Mammary epithelial cell (primary cell): ENCODE measurements at regions of chr7 and their contacts with region 1.

Region 1: DNA sequence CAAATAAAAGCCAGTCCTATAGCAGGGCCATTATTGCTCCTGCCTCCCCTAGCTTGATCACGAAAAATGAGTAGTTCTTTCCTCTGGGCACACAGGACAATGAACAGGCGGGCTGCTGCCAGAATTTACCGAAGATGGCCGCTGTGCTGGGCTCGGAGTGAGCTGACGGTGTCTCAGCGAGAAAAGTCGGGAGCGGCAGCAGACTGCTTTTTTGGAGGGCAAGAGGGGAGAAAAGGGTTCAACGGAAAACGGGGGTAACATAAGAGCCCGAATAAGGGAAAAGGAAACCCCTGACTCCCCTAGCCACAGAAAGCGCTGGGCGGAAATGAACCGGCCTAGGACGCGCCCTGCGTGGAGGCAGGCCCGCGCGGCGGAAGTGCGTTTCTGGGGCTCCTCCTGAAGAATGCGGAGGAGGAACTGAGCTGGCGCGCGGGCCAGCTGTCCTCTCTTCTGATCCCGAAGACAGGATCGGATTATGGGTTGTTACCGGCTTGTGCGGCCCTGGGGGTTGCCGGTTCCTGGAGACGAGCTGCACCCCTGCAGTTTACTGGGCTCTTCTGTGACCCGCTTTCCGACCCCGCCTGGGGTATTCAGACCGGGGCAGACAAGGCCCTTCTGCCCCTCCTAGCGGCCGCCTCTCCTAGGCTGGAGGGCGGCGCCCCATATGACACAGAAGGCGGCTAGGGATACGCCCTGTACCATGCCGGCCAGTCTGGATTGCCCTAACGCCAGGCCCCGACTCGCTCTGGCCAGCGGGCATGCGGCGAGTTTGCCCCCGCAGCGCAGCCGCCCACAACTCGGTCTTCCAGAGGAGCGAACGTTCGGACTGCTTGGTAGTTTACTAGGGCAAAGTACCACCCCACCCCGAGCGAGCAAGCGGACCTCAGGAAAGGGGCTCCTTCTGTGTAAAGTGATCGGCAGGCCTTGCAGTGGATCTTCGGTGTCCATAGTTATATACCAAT is 30.1 kb upstream of the KMT2E start:
- DNase-seq: peak; percentile 86
- H3K4me3 ChIP-seq: peak overlapping the region; percentile 53 to 74 (median 54)
- H3K27ac ChIP-seq: peak overlapping the region; percentile 99
- H3K4me1 ChIP-seq: peaks cover 52% of the 10 kb centered on the region
- H3K27me3 ChIP-seq: no peaks in the 10 kb centered on the region
- CTCF ChIP-seq: peak; percentile 3 to 59

Region 2: DNA sequence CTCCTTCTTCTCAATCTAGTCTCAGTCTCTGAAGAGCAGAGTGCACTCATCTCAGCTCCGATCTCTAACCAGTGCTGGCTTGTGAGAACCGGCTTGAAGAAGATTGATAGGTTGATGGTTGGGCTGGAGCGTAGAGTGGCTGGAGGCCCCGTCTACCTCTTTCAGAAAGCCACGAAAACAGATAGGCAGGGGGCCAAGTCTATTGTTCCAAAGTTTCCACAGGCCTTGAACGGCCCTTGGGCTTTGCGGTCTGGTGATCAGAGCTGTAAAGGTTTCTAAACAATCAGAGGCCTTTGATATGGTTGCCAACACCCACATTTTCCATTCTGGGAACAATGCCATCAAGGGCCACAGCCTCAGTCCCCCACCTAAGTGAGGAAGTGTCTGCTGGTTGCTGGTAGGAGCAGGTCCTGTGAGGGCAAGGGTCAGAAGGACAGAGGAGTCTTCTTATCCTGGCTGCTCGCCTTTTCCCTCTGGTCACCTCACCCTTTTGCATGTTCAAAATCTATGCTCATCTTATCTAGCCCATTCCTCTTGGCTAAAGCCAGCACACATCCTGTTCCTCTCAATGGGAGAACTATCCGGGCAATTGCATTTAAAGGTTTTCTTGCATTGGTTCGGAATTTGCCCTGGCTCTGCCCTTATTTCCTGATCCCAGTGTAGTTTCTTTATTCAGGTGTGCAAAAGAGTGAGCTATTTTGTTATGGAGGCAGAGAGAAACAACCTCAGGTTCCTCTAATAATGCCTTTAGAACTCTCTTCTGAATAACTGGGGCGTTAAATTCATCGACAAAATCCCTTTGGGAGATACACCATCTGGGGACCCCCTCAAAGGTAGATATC is 40.1 kb before region 1 on chr7:
- CTCF ChIA-PET with region 1: interaction called, 4 read pairs
- dilution Hi-C with region 1: loop called (anchors 5 kb)
- in situ Hi-C with region 1: no loop called
- intact Hi-C with region 1: loop called (anchors 1 kb)
- DNase-seq: peak; percentile 68
- H3K4me3 ChIP-seq: no peak overlapping the region
- H3K27ac ChIP-seq: peak overlapping the region; percentile 98
- H3K4me1 ChIP-seq: peaks cover 33% of the 10 kb centered on the region
- H3K27me3 ChIP-seq: no peaks in the 10 kb centered on the region
- CTCF ChIP-seq: no peak

Region 3: DNA sequence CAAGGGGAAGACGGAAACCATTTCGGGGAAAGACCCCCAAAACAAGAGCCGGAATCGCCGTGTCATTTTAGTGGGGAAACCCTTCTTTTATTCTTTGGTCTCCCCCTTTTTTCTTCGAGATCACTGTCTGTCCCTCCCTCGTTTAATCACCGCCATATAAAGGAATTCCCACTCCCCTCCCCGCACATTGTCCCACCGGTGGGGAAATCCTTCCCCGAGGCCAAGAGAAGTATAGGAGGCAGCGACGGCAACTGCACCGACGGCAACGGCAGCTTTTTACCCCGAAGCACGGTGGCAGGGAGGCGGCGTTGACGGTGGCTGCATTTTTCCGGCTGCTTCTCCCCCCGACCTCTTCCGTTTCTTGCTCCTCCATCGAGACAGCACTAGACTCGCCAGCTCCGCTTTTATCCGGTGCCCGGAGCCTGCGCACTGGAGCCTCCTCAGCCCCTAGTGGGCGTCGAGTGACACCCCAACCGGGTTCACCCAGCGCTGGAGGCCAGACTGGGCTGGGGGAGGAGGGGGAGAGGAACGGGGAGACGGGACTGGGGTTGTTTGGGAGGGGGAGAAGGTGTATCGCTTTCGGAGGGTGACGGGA is 29.5 kb after region 1 on chr7:
- CTCF ChIA-PET with region 1: interaction called, 4 read pairs
- dilution Hi-C with region 1: loop called (anchors 5 kb)
- in situ Hi-C with region 1: no loop called
- intact Hi-C with region 1: loop called (anchors 1 kb)
- DNase-seq: peak; percentile 92
- H3K4me3 ChIP-seq: peak overlapping the region; percentile 90 to 99 (median 99)
- H3K27ac ChIP-seq: peak overlapping the region; percentile 100
- H3K4me1 ChIP-seq: peaks cover 16% of the 10 kb centered on the region
- H3K27me3 ChIP-seq: no peaks in the 10 kb centered on the region
- CTCF ChIP-seq: peak; percentile 34 to 60

Region 4: GRCh38 chr7:105060437-105060836 is 76.6 kb after region 1 on chr7:
- CTCF ChIA-PET with region 1: no interaction called
- dilution Hi-C with region 1: no loop called
- in situ Hi-C with region 1: no loop called
- intact Hi-C with region 1: loop called (anchors 5 kb)
- DNase-seq: peak; percentile 47
- H3K4me3 ChIP-seq: no peak overlapping the region
- H3K27ac ChIP-seq: no peak overlapping the region
- H3K4me1 ChIP-seq: peaks cover 6% of the 10 kb centered on the region
- H3K27me3 ChIP-seq: no peaks in the 10 kb centered on the region
- CTCF ChIP-seq: no peak

Region 5: GRCh38 chr7:105336009-105336408 is 352.1 kb after region 1 on chr7:
- CTCF ChIA-PET with region 1: no interaction called
- dilution Hi-C with region 1: no loop called
- in situ Hi-C with region 1: no loop called
- intact Hi-C with region 1: loop called (anchors 5 kb)
- DNase-seq: no peak
- H3K4me3 ChIP-seq: no peak overlapping the region
- H3K27ac ChIP-seq: no peak overlapping the region
- H3K4me1 ChIP-seq: peaks cover 4% of the 10 kb centered on the region
- H3K27me3 ChIP-seq: no peaks in the 10 kb centered on the region
- CTCF ChIP-seq: peak; percentile 28 to 34